ENCODE measurements at regions of chr12 and their contacts with region 1.

Region 1: DNA sequence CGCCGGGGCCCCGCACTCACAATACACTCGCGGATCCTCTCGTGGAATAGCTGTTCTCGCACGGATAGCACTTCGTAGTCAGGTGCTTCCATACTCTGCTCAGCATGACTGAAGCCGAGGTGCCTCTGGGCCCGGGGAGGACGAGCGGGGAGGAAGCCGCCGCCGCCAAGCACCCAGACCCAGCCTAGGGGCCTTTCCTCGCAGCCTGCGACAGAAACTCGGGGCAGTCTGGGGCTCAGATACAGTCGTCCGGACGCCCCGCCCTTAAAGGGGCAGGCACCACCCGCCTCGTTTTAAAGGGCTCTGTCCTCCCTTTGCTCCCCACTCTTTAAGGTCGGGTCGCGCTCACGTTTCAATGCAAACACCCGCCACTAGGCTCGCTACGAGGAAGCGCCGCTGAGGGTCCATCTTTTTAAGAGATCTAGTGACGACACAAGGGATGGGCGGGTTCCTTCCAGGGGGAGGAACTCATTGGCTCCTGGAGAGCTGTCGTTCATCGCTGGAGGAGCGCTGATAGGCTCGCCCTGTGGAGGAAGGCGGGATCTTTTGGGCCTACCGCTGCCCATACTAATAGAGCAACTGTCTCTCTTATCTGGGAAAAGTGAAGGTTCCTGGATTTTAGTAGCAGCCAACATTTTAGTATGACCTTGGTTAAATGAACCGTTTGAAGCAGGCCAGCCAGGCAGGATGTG is at the start of gene LMBR1L:
- DNase-seq: peak; percentile 97 to 98 (median 97)
- ATAC-seq: peak; percentile 98
- H3K4me3 ChIP-seq: peak within 1 kb of the TSS; percentile 87
- H3K27ac ChIP-seq: peak within 1 kb of the TSS; percentile 93
- H3K4me1 ChIP-seq: peaks cover 3% of the 10 kb centered on the region
- H3K27me3 ChIP-seq: no peaks in the 10 kb centered on the region
- total RNA-seq, gene LMBR1L: 26.7 to 45.3 (median 34.6) TPM

Region 2: DNA sequence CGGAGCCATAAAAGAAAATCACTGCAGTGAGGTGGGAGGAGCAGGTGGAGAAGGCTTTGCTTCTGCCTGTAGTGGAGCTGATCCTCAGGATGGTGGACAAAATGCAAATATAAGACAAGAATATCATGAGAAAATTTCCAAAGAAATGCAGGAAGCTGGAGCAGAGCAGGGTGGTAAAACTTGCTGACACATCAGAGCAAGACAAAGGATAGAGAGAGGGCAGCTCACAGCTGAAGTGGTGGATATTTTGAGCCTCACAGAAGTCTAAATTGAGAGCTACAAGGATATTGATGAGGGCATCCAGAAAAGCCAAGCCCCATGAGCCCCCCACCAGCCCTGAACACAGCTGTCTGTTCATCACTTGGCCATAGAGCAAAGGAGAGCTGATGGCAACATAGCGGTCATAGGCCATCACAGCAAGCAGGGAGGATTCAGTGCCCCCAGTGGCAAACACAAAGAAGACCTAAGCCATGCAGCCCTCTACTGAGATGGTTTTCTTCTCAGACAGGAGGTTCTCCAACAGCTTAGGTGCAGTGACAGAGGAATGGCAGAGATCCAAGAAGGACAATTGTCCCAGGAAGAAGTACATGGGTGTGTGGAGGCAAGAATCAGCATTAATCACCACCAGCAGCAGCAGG is 668.3 kb before region 1 on chr12:
- intact Hi-C with region 1: no loop called
- DNase-seq: no peak
- ATAC-seq: no peak
- H3K4me3 ChIP-seq: no peak overlapping the region
- H3K27ac ChIP-seq: no peak overlapping the region
- H3K4me1 ChIP-seq: peaks cover 2% of the 10 kb centered on the region
- H3K27me3 ChIP-seq: no peaks in the 10 kb centered on the region

Region 3: GRCh38 chr12:49069507-49070346 is 40.9 kb before region 1 on chr12 and contains the start of gene RHEBL1:
- intact Hi-C with region 1: loop called in 2 of 4 experiments (anchors 10 kb)
- DNase-seq: peak; percentile 99 to 100 (median 99)
- ATAC-seq: peak; percentile 100
- H3K4me3 ChIP-seq: peak within 1 kb of the TSS; percentile 61
- H3K27ac ChIP-seq: no peak within 1 kb of the TSS
- H3K4me1 ChIP-seq: peaks cover 5% of the 10 kb centered on the region
- H3K27me3 ChIP-seq: no peaks in the 10 kb centered on the region
- total RNA-seq, gene RHEBL1: 0.21 to 0.31 TPM in 2 of 4 donors, not detected in the others

Measured in right cardiac atrium (tissue), 5 donors.